ENCODE measurements at regions of chr1 and their contacts with region 1.

Region 1: DNA sequence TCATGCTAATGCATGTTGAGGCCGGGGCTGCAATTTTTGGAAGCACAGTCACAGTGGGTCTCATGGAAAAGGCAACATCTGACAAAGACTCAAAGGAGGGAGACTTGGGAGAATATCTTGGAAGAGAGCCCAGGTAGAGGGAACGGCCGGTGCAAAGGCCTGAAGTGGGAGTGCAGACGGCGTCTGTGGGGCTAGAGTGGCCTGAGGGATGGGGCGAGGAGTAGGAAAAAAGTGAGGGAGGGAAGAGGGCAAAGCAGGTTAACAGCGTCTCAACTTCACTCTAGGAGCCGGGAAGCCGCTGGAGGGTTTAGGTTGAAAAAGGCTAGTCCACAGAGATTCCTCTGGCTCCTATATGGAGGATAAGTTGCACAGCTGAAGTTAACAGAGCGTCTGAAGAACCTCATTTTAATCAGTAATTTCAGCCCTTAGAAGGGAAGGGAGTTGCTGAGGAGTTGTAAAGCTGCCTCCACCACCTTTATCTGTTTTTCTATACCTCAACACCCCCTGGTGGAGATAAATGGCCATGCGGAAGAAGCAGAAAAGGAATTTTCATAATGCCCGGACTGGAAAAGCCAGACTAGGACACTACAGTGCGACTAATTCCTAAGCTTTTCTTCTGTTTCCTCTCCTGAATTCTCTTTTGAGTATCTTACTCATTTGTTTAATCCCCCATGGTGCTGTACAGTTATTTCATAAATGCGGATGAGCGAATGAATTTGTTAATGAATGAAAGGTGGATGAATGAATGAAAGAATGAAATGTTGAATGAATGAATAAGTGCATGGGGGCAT is 78.7 kb upstream of the ZNF281 start:
- DNase-seq: no peak
- ATAC-seq: peak; percentile 82
- H3K4me3 Mint-ChIP-seq: no peak overlapping the region
- H3K27ac Mint-ChIP-seq: no peak overlapping the region
- H3K4me1 Mint-ChIP-seq: peaks cover 8% of the 10 kb centered on the region
- H3K27me3 Mint-ChIP-seq: peaks cover 7% of the 10 kb centered on the region
- CTCF ChIP-seq: peak; percentile 67

Region 2: DNA sequence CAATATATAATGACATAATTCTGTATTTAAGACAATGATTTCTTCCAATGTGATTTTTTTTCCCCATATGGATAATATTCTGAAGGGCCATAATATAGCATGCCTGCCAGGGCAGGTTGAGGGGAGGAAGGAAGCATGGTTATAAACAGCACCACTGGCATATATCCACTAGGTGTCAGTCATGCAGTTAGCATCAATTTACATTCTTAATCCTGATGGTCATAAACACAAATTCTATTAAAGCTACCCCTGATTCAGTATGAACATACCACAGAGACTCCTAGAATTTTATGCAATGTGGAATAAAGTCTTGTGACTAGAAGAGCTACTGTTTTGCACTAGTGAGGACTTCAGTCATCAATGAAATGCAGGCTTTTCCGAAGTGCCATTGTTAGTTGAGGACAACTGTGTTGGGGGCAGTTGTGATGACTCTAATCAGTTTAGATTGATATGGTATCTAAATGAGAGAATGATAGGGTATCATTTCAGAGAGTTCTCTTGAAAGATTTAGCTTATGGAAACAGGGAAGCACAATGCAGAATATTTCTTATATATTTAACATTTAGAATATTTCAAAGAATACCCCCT is 803.8 kb before region 1 on chr1:
- CTCF ChIA-PET with region 1: interaction called, 90 read pairs
- POLR2A ChIA-PET with region 1: no interaction called
- intact Hi-C with region 1: loop called (anchors 1 kb)
- DNase-seq: no peak
- ATAC-seq: peak; percentile 71
- H3K4me3 Mint-ChIP-seq: no peak overlapping the region
- H3K27ac Mint-ChIP-seq: no peak overlapping the region
- H3K4me1 Mint-ChIP-seq: no peaks in the 10 kb centered on the region
- H3K27me3 Mint-ChIP-seq: peaks cover 6% of the 10 kb centered on the region
- CTCF ChIP-seq: peak; percentile 61

Region 3: GRCh38 chr1:200038981-200039848 is 449.4 kb before region 1 on chr1:
- CTCF ChIA-PET with region 1: no interaction called
- POLR2A ChIA-PET with region 1: no interaction called
- intact Hi-C with region 1: loop called (anchors 5 kb)
- DNase-seq: peak; percentile 48
- ATAC-seq: peak; percentile 40
- H3K4me3 Mint-ChIP-seq: peak overlapping the region; percentile 85
- H3K27ac Mint-ChIP-seq: no peak overlapping the region
- H3K4me1 Mint-ChIP-seq: peaks cover 40% of the 10 kb centered on the region
- H3K27me3 Mint-ChIP-seq: peaks cover 59% of the 10 kb centered on the region
- CTCF ChIP-seq: no peak

Region 4: GRCh38 chr1:200099040-200099439 is 389.5 kb before region 1 on chr1:
- CTCF ChIA-PET with region 1: no interaction called
- POLR2A ChIA-PET with region 1: no interaction called
- intact Hi-C with region 1: loop called (anchors 2 kb)
- DNase-seq: no peak
- ATAC-seq: no peak
- H3K4me3 Mint-ChIP-seq: no peak overlapping the region
- H3K27ac Mint-ChIP-seq: no peak overlapping the region
- H3K4me1 Mint-ChIP-seq: no peaks in the 10 kb centered on the region
- H3K27me3 Mint-ChIP-seq: peaks cover 2% of the 10 kb centered on the region
- CTCF ChIP-seq: no peak

Region 5: GRCh38 chr1:200258447-200259375 is 229.9 kb before region 1 on chr1:
- CTCF ChIA-PET with region 1: interaction called, 3 read pairs
- POLR2A ChIA-PET with region 1: no interaction called
- intact Hi-C with region 1: loop called (anchors 1 kb)
- DNase-seq: no peak
- ATAC-seq: peak; percentile 82
- H3K4me3 Mint-ChIP-seq: no peak overlapping the region
- H3K27ac Mint-ChIP-seq: no peak overlapping the region
- H3K4me1 Mint-ChIP-seq: peaks cover 7% of the 10 kb centered on the region
- H3K27me3 Mint-ChIP-seq: no peaks in the 10 kb centered on the region
- CTCF ChIP-seq: peak; percentile 45

Region 6: GRCh38 chr1:200409761-200410565 is 78.6 kb before region 1 on chr1 and contains the start of gene ZNF281:
- CTCF ChIA-PET with region 1: interaction called, 3 read pairs
- POLR2A ChIA-PET with region 1: no interaction called
- intact Hi-C with region 1: loop called (anchors 1 kb)
- DNase-seq: peak; percentile 93
- ATAC-seq: peak; percentile 96
- H3K4me3 Mint-ChIP-seq: peak within 1 kb of the TSS; percentile 97
- H3K27ac Mint-ChIP-seq: peak within 1 kb of the TSS; percentile 95
- H3K4me1 Mint-ChIP-seq: peaks cover 51% of the 10 kb centered on the region
- H3K27me3 Mint-ChIP-seq: no peaks in the 10 kb centered on the region
- CTCF ChIP-seq: no peak
- total RNA-seq, gene ZNF281: 28.2 and 31.2 TPM in 2 replicates

Measured in activated B cell treated with CpG ODN at 0.5 μM for 24 hours (primary cell).